GM12878 (cell line): ENCODE measurements at regions of chrX and their contacts with region 1.

Region 1: GRCh38 chrX:66030505-66031317 is 9.2 kb downstream of the VSIG4 start:
- DNase-seq: no peak
- ATAC-seq: peak; percentile 97
- H3K4me3 ChIP-seq: no peak overlapping the region
- H3K27ac ChIP-seq: no peak overlapping the region
- H3K4me1 ChIP-seq: no peaks in the 10 kb centered on the region
- H3K27me3 ChIP-seq: no peaks in the 10 kb centered on the region
- CTCF ChIP-seq: peak; percentile 58 to 85 (median 78)
- EP300 ChIP-seq: no peak
- POLR2A ChIP-seq: no peak
- RAD21 ChIP-seq: peak; percentile 74

Region 2: GRCh38 chrX:66110112-66110511 is 79.4 kb after region 1 on chrX:
- CTCF ChIA-PET with region 1: interaction called, 36 read pairs
- POLR2A ChIA-PET with region 1: no interaction called
- RAD21 ChIA-PET with region 1: interaction called, 18 read pairs
- SMC1A ChIA-PET with region 1: interaction called, 4 read pairs
- in situ Hi-C with region 1: no loop called
- intact Hi-C with region 1: loop called (anchors 5 kb)
- DNase-seq: no peak
- ATAC-seq: peak; percentile 32
- H3K4me3 ChIP-seq: no peak overlapping the region
- H3K27ac ChIP-seq: no peak overlapping the region
- H3K4me1 ChIP-seq: no peaks in the 10 kb centered on the region
- H3K27me3 ChIP-seq: no peaks in the 10 kb centered on the region
- CTCF ChIP-seq: peak; percentile 33 to 52 (median 34)
- EP300 ChIP-seq: no peak
- POLR2A ChIP-seq: no peak
- RAD21 ChIP-seq: peak; percentile 66

Region 3: DNA sequence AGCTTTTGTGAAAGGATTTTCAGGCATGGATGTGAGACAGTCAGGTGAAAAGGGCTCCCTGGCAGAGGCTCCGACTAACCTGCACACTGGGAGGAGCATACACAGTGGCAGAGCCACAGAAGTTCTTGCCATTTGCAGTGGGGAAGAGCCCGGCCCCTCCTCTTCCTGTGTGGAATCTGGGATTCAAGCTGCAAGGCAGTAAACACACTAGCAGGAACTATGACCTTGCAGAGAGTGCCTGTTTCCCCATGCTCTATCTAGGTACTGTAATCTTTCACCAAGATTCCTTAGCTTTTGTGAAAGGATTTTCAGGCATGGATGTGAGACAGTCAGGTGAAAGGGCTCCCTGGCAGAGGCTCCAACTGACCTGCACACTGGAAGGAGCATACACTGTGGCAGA is 113.5 kb after region 1 on chrX:
- CTCF ChIA-PET with region 1: no interaction called
- POLR2A ChIA-PET with region 1: no interaction called
- RAD21 ChIA-PET with region 1: no interaction called
- SMC1A ChIA-PET with region 1: no interaction called
- in situ Hi-C with region 1: no loop called
- intact Hi-C with region 1: no loop called
- DNase-seq: no peak
- ATAC-seq: no peak
- H3K4me3 ChIP-seq: no peak overlapping the region
- H3K27ac ChIP-seq: no peak overlapping the region
- H3K4me1 ChIP-seq: no peaks in the 10 kb centered on the region
- H3K27me3 ChIP-seq: no peaks in the 10 kb centered on the region; a peak in 1 of 4 replicates
- CTCF ChIP-seq: no peak
- EP300 ChIP-seq: no peak
- POLR2A ChIP-seq: no peak
- RAD21 ChIP-seq: no peak

Region 4: DNA sequence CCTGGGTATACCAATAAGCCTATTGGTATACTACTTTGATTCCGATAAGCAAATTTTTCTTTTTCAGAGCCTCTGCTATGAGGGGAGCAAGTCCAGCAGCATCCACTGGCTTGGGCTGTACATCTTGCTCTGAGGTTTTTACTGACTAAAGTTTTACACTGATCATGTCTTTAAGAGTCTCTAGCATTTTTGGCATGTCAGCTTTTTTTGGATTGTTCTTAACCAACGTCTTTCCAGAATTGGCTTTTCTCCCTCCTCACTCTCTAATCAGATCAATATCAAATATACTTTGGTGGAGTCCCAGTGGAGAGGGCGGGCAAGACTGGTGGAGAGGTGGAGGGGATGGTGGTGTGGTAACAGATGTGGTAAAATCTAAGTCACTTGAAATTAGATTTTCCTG is 330.2 kb after region 1 on chrX:
- CTCF ChIA-PET with region 1: no interaction called
- POLR2A ChIA-PET with region 1: no interaction called
- RAD21 ChIA-PET with region 1: no interaction called
- SMC1A ChIA-PET with region 1: no interaction called
- in situ Hi-C with region 1: no loop called
- intact Hi-C with region 1: no loop called
- DNase-seq: no peak
- ATAC-seq: no peak
- H3K4me3 ChIP-seq: no peak overlapping the region
- H3K27ac ChIP-seq: no peak overlapping the region
- H3K4me1 ChIP-seq: no peaks in the 10 kb centered on the region
- H3K27me3 ChIP-seq: no peaks in the 10 kb centered on the region
- CTCF ChIP-seq: no peak
- EP300 ChIP-seq: no peak
- POLR2A ChIP-seq: no peak
- RAD21 ChIP-seq: no peak